HEK293T (cell line): ENCODE measurements at regions of chr1 and their contacts with region 1.

Region 1: DNA sequence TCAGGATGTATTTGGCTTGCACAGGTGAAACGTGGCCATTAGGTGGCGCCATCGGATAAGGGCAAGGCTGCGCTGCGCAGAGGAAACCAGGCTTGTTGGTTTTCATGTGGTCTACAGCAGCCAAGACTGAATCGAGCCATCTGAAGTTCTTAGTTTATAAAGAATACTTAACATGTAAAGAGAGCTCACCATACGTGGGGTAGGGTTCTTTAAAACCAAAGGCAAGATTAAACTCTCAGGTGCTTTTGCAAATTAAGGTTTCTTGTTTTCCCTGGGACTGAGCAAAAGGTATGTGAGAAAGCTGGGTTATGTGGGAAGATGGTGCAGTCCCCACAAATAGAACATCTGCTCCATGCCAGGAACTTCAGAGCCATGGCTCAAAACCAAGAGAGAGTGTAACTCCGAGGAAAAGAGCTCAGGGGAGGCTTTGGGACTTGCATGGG is 9.3 kb downstream of the MASP2 start:
- DNase-seq: peak; percentile 88

Region 2: DNA sequence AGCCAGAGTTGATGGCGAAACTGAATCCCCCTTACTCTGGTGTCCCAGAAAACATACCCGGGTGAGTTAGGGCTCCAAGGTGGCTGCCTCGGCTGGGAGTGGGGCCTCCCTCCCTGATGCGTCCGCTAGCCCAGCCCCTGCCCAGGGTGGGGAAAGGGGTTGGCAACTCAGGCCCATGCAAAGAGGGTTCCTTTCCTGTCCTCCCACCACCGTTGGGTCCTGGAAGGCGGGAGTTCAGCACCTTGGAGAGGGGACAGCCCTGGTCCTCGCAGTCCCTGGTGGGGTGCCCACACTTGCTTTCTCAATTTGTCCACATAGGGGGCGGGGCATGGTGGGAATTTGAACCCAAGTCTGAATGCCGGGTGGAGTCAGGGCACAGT is 16.0 kb after region 1 on chr1:
- CTCF ChIA-PET with region 1: interaction called, 16 read pairs
- POLR2A ChIA-PET with region 1: interaction called, 3 read pairs
- DNase-seq: no peak

Region 3: DNA sequence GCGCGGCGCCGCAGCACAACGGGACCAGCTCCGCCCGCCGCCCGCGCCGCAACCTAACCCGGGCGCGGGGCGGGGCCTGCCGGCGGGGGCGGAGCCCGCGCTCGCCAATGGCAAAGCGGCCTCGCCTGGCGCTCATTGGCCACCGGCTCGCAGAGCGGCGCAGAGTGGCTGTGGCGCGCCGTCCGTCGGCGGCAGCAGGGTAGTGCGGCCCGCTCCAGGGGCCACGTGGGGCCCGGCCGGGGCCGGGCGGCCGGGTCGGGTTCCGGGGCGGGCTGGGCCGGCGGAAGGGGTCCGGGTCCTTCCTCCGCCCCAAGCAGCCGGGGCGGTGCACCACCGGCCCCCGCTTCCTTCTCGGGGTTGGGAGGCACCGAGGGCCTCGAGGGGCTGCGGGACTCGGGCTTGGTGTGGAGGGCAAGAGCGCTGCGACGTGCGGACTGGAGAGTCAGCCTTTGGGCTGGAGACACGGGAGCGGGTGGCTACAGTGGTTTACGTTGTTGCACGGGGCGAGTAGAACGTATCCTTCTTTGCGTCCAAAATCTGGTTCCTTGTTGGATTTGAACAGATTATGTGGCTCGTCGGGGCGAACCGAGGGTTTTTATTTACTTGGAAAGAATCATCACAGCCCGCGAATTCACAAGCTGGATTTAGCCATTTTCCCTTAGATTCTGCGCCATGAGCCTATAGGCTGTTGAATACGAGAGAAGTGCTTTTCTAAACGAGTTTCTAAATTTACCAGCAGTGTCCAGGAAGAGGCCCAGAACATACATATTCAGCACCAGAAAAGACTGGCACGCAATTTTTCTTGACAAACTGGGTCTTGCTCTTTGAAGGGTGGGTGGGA is 22.4 kb after region 1 on chr1 and contains the start of gene SRM:
- CTCF ChIA-PET with region 1: interaction called, 20 read pairs
- POLR2A ChIA-PET with region 1: interaction called, 8 read pairs
- DNase-seq: peak; percentile 97

Region 4: DNA sequence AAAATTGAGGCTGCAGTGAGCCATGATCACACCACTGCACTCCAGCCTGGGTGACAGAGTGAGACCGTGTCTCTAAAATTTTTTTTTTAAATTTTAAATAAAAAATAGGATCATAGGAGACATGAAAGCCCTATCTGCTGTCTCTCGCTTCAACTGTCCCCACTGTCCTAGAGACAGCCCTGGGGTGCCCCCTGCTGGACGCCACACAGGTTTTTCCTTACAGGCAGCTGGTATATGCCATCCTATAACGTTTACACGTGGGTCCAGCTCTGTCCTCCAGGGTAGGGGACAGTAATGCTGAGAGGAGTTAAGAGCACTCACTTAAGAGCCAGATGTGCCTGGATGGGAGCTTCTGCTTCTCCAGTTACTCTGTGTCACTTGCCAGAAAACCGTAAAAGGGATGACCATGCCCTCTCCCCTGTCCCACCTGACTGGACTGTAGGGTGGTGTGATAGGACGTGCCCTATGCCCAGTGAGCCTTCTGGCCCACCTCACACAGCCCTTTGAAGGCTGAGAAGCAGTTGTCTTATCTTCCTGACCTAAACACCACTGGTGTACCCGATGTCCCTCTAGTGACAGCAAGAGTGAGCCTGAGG is 608.0 kb after region 1 on chr1:
- CTCF ChIA-PET with region 1: interaction called, 18 read pairs
- POLR2A ChIA-PET with region 1: no interaction called
- DNase-seq: peak; percentile 73